SK-N-SH (cell line): ENCODE measurements at regions of chr3 and their contacts with region 1.

Region 1: GRCh38 chr3:143674100-143674968 is 173.9 kb downstream of the SLC9A9 start:
- DNase-seq: peak; percentile 48
- H3K4me3 ChIP-seq: no peak overlapping the region; a peak in 1 of 4 replicates
- H3K27ac ChIP-seq: no peak overlapping the region
- H3K4me1 ChIP-seq: no peaks in the 10 kb centered on the region
- H3K27me3 ChIP-seq: peaks cover 17% of the 10 kb centered on the region; the same call in 1 of the 2 replicates
- CTCF ChIP-seq: peak; percentile 91
- EP300 ChIP-seq: no peak
- RAD21 ChIP-seq: peak; percentile 74

Region 2: DNA sequence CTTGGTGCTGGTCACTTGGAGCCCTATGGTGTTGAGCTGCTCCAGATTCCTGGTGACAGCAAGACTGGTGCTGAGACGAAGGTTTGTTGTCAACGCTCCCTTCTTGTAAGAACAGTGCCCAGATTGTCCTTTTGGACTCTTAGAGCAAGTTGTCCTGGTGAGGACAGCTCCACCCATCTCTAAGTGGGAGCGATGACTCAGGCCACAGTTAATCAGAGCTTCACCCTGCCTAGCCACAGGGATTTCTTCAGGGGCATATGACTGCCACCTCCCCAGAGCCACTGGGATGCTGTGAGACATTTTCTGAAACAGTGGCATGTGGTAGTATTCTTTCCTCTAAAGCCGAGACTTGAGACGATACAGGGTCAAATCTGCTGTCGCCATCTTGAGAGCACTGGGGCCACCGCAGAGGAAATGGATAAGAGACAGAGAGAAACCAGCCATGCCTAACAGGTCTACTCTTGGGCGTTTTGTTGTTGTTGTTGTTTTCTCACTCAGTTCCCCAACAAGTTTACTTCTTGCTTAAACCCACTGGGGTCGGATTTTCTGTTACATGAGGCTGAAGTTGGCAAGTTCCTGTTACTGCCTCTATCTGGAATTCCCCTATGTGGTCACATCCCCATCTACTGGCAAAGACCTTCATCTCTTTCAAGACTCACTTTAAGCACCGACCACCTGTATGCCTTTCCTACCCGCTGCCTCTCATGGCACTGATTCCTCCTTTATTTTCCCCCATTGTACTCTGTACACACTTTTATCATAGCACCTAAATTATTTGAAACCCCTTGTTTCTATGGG is 769.5 kb before region 1 on chr3:
- CTCF ChIA-PET with region 1: no interaction called
- POLR2A ChIA-PET with region 1: no interaction called
- DNase-seq: no peak
- H3K4me3 ChIP-seq: no peak overlapping the region
- H3K27ac ChIP-seq: no peak overlapping the region
- H3K4me1 ChIP-seq: peaks cover 0 to 6% of the 10 kb centered on the region in 2 experiments; a peak in 1 of 4 replicates
- H3K27me3 ChIP-seq: no peaks in the 10 kb centered on the region
- CTCF ChIP-seq: peak; percentile 40
- EP300 ChIP-seq: no peak
- RAD21 ChIP-seq: peak; percentile 44

Region 3: DNA sequence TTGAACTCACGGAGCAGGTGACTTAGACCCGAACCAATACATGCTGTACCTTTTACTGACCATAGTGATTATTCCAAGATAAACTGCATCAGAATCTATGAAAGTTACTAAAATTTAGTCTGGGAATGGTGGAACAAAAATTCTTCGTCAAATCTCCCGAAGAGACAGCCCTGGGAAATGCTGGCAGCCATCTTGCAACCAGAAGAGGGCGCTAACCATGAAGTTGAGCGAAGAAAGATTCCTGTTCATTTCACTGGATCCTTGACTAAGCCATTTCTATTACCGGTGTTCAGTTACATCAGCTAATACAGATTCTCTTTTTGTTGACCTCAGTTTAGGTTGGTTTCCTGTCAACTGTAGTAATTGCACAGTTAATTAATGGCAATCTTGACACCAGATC is 25.6 kb before region 1 on chr3:
- CTCF ChIA-PET with region 1: interaction called, 11 read pairs
- POLR2A ChIA-PET with region 1: no interaction called
- DNase-seq: peak; percentile 1
- H3K4me3 ChIP-seq: no peak overlapping the region; a peak in 1 of 4 replicates
- H3K27ac ChIP-seq: no peak overlapping the region
- H3K4me1 ChIP-seq: no peaks in the 10 kb centered on the region; a peak in 1 of 4 replicates
- H3K27me3 ChIP-seq: peaks cover 5% of the 10 kb centered on the region; the same call in 1 of the 2 replicates
- CTCF ChIP-seq: peak; percentile 57
- EP300 ChIP-seq: no peak
- RAD21 ChIP-seq: no peak

Region 4: GRCh38 chr3:143661677-143662076 is 12.7 kb before region 1 on chr3:
- CTCF ChIA-PET with region 1: interaction called, 26 read pairs
- POLR2A ChIA-PET with region 1: no interaction called
- DNase-seq: no peak
- H3K4me3 ChIP-seq: no peak overlapping the region; a peak in 1 of 4 replicates
- H3K27ac ChIP-seq: no peak overlapping the region
- H3K4me1 ChIP-seq: no peaks in the 10 kb centered on the region
- H3K27me3 ChIP-seq: no peaks in the 10 kb centered on the region
- CTCF ChIP-seq: no peak
- EP300 ChIP-seq: no peak
- RAD21 ChIP-seq: no peak